Ascending aorta (tissue), 2 donors: ENCODE measurements at regions of chr6 and their contacts with region 1.

Region 1: DNA sequence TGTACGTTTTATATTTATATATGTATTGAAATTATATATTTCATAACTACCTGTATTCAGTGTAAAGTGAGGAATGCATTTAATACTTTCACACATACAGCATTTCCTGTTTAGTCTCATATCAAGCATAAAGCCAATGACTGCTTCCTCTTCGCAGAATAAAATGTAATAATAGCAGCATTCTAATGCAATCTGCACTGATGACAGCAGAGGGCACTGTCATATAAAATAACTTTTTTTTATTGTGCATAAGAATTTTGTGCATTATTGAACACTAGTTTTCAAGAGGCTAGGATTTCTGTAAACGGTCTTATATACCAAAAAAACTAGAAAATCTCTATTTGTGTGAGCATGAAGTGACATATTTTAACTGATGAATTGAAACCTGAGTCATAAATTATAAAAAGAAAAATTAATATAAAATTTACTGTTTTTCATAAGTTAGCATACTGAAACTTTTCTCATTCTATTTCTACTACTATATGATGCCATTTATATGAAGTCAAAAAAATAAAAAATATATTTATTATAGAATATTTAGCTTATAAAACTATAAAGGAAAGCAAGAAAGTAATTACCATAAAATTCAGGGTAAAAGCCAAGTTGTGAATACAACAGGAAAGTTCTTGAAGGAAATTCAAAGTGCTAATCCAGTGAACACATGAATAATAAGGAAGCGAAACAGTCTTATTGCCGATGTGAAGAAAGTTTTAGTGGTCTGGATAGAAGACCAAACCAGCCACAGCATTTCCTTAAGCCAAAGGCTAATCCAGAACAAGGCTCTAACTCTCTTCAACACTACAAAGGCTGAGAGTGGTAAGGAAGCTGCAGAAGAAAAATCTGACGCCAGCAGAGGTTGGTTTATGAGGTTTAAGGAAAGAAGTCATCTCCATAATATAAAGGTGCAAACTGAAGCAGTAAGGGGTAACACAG is 36.3 kb downstream of the RNF146 start:
- DNase-seq: no peak
- H3K4me3 ChIP-seq: no peak overlapping the region
- H3K27ac ChIP-seq: no peak overlapping the region
- H3K4me1 ChIP-seq: peaks cover 0 to 13% of the 10 kb centered on the region in 2 donors
- H3K27me3 ChIP-seq: no peaks in the 10 kb centered on the region
- CTCF ChIP-seq: peak; percentile 44 to 73 (median 52)

Region 2: DNA sequence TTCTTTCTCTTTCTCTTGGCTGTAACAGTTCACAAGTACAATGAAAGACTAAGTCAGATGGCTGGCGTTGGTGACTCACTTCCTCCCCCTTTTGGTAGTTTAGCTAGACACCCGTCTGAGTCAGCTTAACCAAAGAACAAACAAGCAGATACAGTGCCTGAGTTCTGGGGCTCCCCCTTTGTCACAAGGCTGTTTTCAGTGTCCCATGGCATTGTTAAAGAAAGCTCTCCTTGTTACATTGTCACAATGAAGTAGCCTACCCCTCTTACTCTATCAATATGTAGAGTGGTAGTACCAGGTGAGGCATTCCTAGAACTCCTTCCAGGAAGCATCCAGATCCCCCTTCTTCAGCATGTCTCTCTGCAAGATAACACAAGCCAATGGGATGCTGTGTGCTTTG is 117.6 kb after region 1 on chr6:
- intact Hi-C with region 1: loop called (anchors 10 kb)
- DNase-seq: peak; percentile 55 to 87
- H3K4me3 ChIP-seq: no peak overlapping the region
- H3K27ac ChIP-seq: peak overlapping the region; percentile 12 to 25
- H3K4me1 ChIP-seq: peaks cover 0 to 9% of the 10 kb centered on the region in 2 donors
- H3K27me3 ChIP-seq: no peaks in the 10 kb centered on the region
- CTCF ChIP-seq: peak in 2 of 3 experiments; percentile 21 to 31

Region 3: DNA sequence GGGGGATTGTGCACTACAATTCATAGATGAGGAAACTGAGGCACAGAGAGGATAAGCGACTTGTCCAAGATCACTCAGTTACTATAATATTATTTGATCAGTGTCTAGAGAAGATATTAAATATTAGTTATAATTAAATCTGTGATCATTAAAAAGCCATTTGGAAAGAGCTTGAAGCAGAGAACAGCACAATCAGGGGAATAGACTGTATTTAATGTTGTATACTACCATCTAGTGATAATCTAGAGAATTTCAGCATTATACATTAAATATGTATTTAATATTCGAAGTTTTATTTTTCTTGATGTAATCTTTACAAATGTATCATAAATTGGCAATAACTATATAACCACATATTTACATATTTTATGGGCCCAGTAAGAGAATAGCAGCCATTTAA is 236.3 kb after region 1 on chr6:
- intact Hi-C with region 1: loop called (anchors 2 kb)
- DNase-seq: no peak
- H3K4me3 ChIP-seq: no peak overlapping the region
- H3K27ac ChIP-seq: no peak overlapping the region
- H3K4me1 ChIP-seq: no peaks in the 10 kb centered on the region
- H3K27me3 ChIP-seq: no peaks in the 10 kb centered on the region
- CTCF ChIP-seq: peak in 2 of 3 experiments; percentile 33 to 60